ENCODE measurements at regions of chr1 and their contacts with region 1.

Region 1: DNA sequence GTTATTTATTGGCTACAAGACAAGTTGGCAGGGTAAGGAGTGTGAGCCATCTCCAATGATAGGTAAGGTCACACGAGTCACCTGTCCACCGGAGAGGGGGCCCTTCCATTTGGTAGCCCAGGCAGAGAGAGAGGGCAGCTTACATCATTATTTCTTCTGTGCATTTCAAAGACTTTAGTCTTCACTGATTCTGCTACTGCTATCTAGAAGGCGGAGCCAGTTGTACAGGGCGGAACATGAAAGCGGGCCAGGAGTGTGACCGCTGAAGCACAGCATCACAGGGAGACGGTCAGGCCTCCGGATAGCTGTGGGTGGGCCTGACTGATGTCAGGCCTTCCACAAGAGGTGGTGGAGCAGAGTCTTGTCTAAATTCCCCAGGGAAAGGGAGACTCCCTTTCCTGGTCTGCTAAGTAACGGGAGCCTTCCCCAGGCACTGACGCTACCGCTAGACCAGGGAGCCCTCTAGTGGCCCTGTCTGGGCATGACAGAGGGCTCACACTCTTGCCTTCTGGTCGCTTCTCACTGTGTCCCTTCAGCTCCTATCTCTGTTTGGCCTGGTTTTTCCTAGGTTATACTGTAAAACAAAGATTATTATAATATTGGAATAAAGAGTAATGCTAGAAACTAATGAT is 36.7 kb downstream of the ZNF695 start:
- DNase-seq: peak in 4 of 5 donors; percentile 9 to 31 (median 25)
- H3K4me3 ChIP-seq: no peak overlapping the region
- H3K4me3 Mint-ChIP-seq: peak overlapping the region in 1 of 8 donors; percentile 55
- H3K27ac ChIP-seq: no peak overlapping the region
- H3K27ac Mint-ChIP-seq: no peak overlapping the region
- H3K4me1 ChIP-seq: no peaks in the 10 kb centered on the region
- H3K4me1 Mint-ChIP-seq: no peaks in the 10 kb centered on the region
- H3K27me3 ChIP-seq: no peaks in the 10 kb centered on the region
- H3K27me3 Mint-ChIP-seq: peaks cover 0 to 3% of the 10 kb centered on the region in 2 donors

Region 2: DNA sequence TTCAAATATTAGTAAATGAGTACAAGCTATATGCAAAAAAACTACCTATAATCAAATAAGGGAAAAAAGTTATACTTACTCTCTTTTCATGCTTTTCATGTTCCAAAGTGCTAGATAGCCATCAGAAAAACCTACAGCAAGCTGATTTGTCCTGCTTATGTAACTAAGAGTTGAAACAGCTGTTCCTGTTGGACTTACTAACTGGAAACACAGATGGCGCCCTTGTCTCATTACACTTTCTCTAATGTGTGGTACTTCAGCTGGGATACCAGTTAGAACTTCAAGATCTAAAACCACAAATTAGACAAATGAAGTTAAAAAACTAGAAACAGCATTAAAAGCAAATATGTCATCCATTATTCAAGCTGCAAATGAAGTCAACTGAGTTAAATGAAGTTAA is 63.7 kb before region 1 on chr1:
- CTCF ChIA-PET with region 1: interaction called, 15 read pairs
- POLR2A ChIA-PET with region 1: no interaction called
- intact Hi-C with region 1: no loop called
- DNase-seq: peak in 4 of 5 donors; percentile 15 to 28 (median 22)
- H3K4me3 ChIP-seq: no peak overlapping the region
- H3K4me3 Mint-ChIP-seq: no peak overlapping the region
- H3K27ac ChIP-seq: no peak overlapping the region
- H3K27ac Mint-ChIP-seq: peak overlapping the region in 2 of 7 donors; percentile 46 to 85
- H3K4me1 ChIP-seq: no peaks in the 10 kb centered on the region
- H3K4me1 Mint-ChIP-seq: peaks cover 0 to 14% (median 4%) of the 10 kb centered on the region in 4 donors
- H3K27me3 ChIP-seq: no peaks in the 10 kb centered on the region
- H3K27me3 Mint-ChIP-seq: no peaks in the 10 kb centered on the region